Dendritic cell treated with granulocyte-macrophage colony-stimulating factor and Interleukin-4, amounts not matched to agents 40 ng/mL and 50 ng/mL, for 4 days (primary cell): ENCODE measurements at regions of chr5 and their contacts with region 1.

Region 1: DNA sequence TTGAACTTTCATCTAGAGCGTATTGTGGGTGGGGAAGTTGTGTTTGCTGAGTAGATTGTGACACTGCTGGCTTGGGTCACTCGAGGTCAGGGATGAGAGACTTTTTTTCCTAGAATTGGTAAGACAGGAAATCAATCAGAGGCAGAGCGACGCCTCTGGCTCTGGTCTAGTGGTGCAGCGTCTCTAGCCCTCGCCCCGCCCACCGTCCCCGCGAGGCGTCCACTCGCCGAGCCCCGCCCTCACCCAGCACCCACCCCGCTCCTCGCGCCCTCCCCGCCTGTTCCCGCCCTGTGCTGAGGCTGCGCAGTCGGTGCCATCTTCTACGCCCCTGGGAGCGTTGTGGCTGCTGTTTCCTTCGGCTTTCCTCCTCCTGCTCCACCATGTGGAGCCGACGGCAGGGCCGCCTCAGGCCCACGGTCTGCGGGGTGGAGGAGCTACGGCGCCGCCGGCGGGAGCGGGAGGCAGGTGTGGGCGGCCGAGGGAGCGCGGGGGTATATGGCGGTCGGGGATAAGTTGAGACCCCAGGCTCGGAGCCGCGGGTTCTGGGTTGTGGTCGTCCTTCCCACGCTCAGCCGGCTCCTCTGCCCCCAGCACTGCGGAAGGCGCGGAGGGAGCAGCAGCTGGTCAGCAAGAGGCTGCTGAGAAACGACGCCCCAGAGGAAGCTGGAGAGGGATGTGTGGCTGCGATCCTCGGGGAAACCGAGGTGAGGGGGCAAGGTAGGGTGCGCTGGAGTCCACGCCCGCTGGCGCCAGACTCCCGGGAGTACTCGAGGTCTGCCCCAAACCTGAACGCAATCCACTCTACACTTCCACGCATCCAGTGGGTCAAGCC is at the start of gene TMCO6:
- H3K4me3 Mint-ChIP-seq: peak within 1 kb of the TSS; percentile 82
- H3K27ac Mint-ChIP-seq: peak within 1 kb of the TSS; percentile 83
- H3K4me1 Mint-ChIP-seq: peaks cover 56% of the 10 kb centered on the region
- H3K27me3 Mint-ChIP-seq: no peaks in the 10 kb centered on the region

Region 2: GRCh38 chr5:140564196-140565023 is 75.0 kb before region 1 on chr5 and contains the starts of genes APBB3 and SLC35A4:
- intact Hi-C with region 1: loop called (anchors 2 kb)
- H3K4me3 Mint-ChIP-seq: peak within 1 kb of the TSS; percentile 96
- H3K27ac Mint-ChIP-seq: peak within 1 kb of the TSS; percentile 97
- H3K4me1 Mint-ChIP-seq: peaks cover 63% of the 10 kb centered on the region
- H3K27me3 Mint-ChIP-seq: no peaks in the 10 kb centered on the region

Region 3: DNA sequence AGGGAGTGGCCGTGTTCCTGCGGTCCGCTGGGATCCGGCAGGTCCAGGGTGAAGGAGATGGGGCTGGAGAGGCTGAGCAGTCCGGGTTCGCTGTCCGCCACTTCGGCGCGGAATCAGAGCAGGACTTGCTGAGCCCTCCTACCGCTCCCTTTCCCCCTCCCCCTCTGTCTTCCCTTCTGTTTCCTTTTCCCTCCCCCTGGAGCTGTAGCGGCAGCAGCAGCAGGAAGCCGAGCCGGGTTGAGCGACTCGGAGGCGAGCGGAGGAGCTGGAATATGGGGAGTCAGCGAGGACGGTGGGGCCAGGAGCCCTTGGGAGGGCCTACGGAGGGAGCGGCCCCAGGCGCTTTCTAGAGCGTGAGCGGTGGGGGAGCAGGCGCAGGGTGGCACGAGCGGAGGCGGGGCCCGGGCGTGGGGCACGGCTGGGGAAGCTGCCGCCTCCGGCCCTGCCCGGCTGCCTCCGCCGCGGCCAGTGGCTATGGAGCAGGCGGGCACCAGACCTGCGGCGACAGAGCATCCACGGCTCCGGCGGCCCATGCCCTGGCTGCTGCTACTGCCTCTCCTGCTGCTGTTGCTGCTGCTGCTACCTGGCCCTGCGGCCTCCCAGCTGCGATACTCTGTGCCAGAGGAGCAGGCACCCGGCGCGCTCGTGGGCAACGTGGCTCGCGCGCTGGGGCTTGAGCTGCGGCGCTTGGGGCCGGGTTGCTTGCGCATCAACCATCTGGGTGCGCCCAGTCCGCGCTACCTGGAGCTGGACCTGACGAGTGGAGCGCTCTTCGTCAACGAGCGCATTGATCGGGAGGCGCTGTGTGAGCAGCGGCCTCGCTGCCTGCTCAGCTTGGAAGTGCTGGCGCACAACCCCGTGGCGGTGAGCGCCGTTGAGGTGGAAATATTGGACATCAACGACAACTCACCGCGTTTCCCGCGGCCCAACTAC is 327.2 kb after region 1 on chr5 and contains the start of gene PCDHAC2:
- intact Hi-C with region 1: no loop called
- H3K4me3 Mint-ChIP-seq: no peak within 1 kb of the TSS
- H3K27ac Mint-ChIP-seq: no peak within 1 kb of the TSS
- H3K4me1 Mint-ChIP-seq: no peaks in the 10 kb centered on the region
- H3K27me3 Mint-ChIP-seq: peaks cover 35% of the 10 kb centered on the region

Region 4: DNA sequence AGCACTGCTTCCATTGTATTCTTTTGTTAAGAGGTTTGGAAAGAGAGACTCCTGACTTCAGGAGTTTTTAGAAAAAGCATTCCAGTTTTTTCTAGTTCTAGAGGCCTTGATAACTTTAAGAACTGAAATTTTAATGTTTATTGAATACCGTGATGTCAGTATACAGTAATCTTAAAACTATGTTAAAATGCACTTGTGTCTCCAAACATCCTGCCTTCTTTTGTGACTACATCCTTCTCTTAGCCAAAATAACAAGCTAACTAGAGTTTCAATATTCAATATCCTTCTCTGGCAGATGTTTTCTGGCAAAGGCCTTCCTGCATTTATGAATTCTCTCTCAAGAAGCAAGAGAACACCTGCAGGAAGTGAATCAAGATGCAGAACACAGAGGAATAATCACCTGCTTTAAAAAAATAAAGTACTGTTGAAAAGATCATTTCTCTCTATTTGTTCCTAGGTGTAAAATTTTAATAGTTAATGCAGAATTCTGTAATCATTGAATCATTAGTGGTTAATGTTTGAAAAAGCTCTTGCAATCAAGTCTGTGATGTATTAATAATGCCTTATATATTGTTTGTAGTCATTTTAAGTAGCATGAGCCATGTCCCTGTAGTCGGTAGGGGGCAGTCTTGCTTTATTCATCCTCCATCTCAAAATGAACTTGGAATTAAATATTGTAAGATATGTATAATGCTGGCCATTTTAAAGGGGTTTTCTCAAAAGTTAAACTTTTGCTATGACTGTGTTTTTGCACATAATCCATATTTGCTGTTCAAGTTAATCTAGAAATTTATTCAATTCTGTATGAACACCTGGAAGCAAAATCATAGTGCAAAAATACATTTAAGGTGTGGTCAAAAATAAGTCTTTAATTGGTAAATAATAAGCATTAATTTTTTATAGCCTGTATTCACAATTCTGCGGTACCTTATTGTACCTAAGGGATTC is 1512.3 kb after region 1 on chr5:
- intact Hi-C with region 1: no loop called
- H3K4me3 Mint-ChIP-seq: no peak overlapping the region
- H3K27ac Mint-ChIP-seq: no peak overlapping the region
- H3K4me1 Mint-ChIP-seq: peaks cover 10% of the 10 kb centered on the region
- H3K27me3 Mint-ChIP-seq: no peaks in the 10 kb centered on the region